HepG2 (cell line): ENCODE measurements at regions of chr17 and their contacts with region 1.

Region 1: GRCh38 chr17:74176546-74177001 is 26.9 kb upstream of the RPL38 start:
- DNase-seq: peak; percentile 60
- ATAC-seq: peak; percentile 94
- H3K4me3 ChIP-seq: no peak overlapping the region
- H3K27ac ChIP-seq: no peak overlapping the region
- H3K4me1 ChIP-seq: no peaks in the 10 kb centered on the region
- H3K27me3 ChIP-seq: peaks cover 7 to 41% of the 10 kb centered on the region in 2 experiments; a peak in 4 of 5 replicates
- CTCF ChIP-seq: peak; percentile 90
- EP300 ChIP-seq: no peak
- POLR2A ChIP-seq: no peak
- RAD21 ChIP-seq: peak; percentile 70

Region 2: GRCh38 chr17:74089869-74090464 is 86.6 kb before region 1 on chr17:
- CTCF ChIA-PET with region 1: interaction called, 7 read pairs
- POLR2A ChIA-PET with region 1: no interaction called
- in situ Hi-C with region 1: no loop called
- intact Hi-C with region 1: loop called (anchors 1 kb)
- DNase-seq: peak; percentile 68
- ATAC-seq: peak; percentile 86
- H3K4me3 ChIP-seq: no peak overlapping the region
- H3K27ac ChIP-seq: no peak overlapping the region
- H3K4me1 ChIP-seq: no peaks in the 10 kb centered on the region
- H3K27me3 ChIP-seq: peaks cover 3 to 5% of the 10 kb centered on the region in 2 experiments; a peak in 2 of 5 replicates
- CTCF ChIP-seq: peak; percentile 85
- EP300 ChIP-seq: no peak
- POLR2A ChIP-seq: no peak
- RAD21 ChIP-seq: 0 out of 2 replicates have a peak, but pooled peaks have one; percentile 25